Endothelial cell of umbilical vein (primary cell): ENCODE measurements at regions of chr11 and their contacts with region 1.

Region 1: GRCh38 chr11:11787305-11788062 is 54.3 kb upstream of the USP47 start:
- DNase-seq: peak; percentile 66
- H3K4me3 ChIP-seq: no peak overlapping the region
- H3K27ac ChIP-seq: no peak overlapping the region
- H3K4me1 ChIP-seq: no peaks in the 10 kb centered on the region
- H3K27me3 ChIP-seq: peaks cover 0 to 5% of the 10 kb centered on the region in 2 experiments
- CTCF ChIP-seq: peak; percentile 69 to 73
- POLR2A ChIP-seq: no peak

Region 2: GRCh38 chr11:11022125-11022730 is 765.3 kb before region 1 on chr11:
- CTCF ChIA-PET with region 1: interaction called, 227 read pairs
- POLR2A ChIA-PET with region 1: no interaction called
- dilution Hi-C with region 1: no loop called
- intact Hi-C with region 1: no loop called
- DNase-seq: peak; percentile 29
- H3K4me3 ChIP-seq: no peak overlapping the region
- H3K27ac ChIP-seq: no peak overlapping the region
- H3K4me1 ChIP-seq: peaks cover 19% of the 10 kb centered on the region
- H3K27me3 ChIP-seq: peaks cover 0 to 9% of the 10 kb centered on the region in 2 experiments
- CTCF ChIP-seq: peak; percentile 16 to 26
- POLR2A ChIP-seq: no peak

Region 3: DNA sequence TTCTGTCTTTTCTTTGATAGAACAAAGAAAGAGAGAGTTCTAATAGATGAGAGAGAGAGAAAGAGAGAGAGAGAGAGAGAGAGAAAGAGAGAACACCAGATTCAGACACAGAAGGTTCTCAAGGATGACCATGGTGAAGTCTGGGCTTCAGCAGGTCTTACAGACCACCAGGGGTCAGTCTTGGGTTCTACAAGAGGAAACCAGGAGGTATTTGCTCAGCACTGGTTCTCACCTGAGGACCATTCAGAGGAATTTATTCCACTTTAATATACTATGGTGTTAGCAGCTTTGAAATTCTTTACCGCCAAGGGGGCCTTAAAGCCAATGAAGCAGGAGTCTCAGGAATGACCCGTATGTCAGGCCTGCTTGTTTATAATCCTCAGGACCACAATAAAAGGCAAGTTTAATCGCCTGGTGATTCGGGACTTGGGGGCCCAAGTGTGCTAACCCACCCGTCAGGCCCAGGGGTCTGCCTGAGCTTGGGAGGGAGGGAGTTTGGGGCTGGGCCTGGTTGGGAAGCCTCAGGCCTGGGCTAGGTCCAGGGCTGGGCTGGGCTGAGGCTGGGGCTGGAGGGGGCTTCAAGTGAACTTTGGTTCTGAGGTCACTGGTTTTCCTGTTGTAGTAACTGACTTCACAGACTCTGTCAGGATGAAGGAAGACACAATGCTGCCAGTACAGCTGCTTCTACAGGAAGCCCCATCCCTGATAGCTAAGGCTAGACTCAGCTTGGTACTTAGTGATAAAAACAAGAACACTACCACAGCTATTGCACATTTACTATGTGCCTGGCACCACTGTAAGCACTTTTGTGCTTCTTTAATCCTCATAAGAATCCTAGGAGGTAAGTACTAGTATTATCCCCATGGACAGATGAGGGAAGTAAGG is 750.4 kb before region 1 on chr11:
- CTCF ChIA-PET with region 1: interaction called, 53 read pairs
- POLR2A ChIA-PET with region 1: no interaction called
- dilution Hi-C with region 1: no loop called
- intact Hi-C with region 1: loop called (anchors 1 kb)
- DNase-seq: peak; percentile 16
- H3K4me3 ChIP-seq: no peak overlapping the region
- H3K27ac ChIP-seq: no peak overlapping the region
- H3K4me1 ChIP-seq: no peaks in the 10 kb centered on the region
- H3K27me3 ChIP-seq: peaks cover 0 to 13% of the 10 kb centered on the region in 2 experiments
- CTCF ChIP-seq: peak; percentile 34 to 59
- POLR2A ChIP-seq: no peak

Region 4: GRCh38 chr11:11230802-11231562 is 556.5 kb before region 1 on chr11:
- CTCF ChIA-PET with region 1: interaction called, 8 read pairs
- POLR2A ChIA-PET with region 1: no interaction called
- dilution Hi-C with region 1: no loop called
- intact Hi-C with region 1: loop called (anchors 1 kb)
- DNase-seq: no peak
- H3K4me3 ChIP-seq: no peak overlapping the region
- H3K27ac ChIP-seq: no peak overlapping the region
- H3K4me1 ChIP-seq: no peaks in the 10 kb centered on the region
- H3K27me3 ChIP-seq: no peaks in the 10 kb centered on the region
- CTCF ChIP-seq: peak; percentile 22 to 35
- POLR2A ChIP-seq: no peak

Region 5: GRCh38 chr11:11621573-11622319 is 165.7 kb before region 1 on chr11 and contains the start of gene GALNT18:
- CTCF ChIA-PET with region 1: no interaction called
- POLR2A ChIA-PET with region 1: no interaction called
- dilution Hi-C with region 1: no loop called
- intact Hi-C with region 1: loop called (anchors 5 kb)
- DNase-seq: peak; percentile 88
- H3K4me3 ChIP-seq: peak within 1 kb of the TSS in 2 of 3 experiments; percentile 28 to 31
- H3K27ac ChIP-seq: no peak within 1 kb of the TSS
- H3K4me1 ChIP-seq: no peaks in the 10 kb centered on the region
- H3K27me3 ChIP-seq: peaks cover 39% of the 10 kb centered on the region in 2 experiments
- CTCF ChIP-seq: peak; percentile 13 to 55
- POLR2A ChIP-seq: no peak
- total RNA-seq, gene GALNT18: 0.18 and 0.32 TPM in 2 replicates

Region 6: DNA sequence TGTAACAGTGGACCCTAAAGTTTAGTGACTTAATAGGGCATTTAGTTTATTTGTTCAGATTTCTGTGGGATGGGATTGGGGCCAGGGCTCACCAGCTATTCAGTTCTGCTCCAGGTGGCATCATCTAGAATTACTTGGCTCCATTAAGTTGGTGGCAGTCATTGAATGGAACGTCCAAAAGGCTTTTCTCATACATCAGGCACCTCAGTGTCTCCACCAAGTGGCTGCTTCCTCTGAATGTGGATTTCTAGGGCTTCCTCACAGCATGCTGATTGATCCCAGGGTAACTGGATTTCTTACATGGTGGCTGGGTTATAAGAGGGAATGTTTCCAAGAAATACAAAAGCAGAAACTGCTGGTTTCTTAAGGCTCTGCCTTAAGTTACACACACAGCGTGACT is 89.0 kb after region 1 on chr11:
- CTCF ChIA-PET with region 1: no interaction called
- POLR2A ChIA-PET with region 1: no interaction called
- dilution Hi-C with region 1: no loop called
- intact Hi-C with region 1: no loop called
- DNase-seq: no peak
- H3K4me3 ChIP-seq: no peak overlapping the region
- H3K27ac ChIP-seq: no peak overlapping the region
- H3K4me1 ChIP-seq: no peaks in the 10 kb centered on the region
- H3K27me3 ChIP-seq: no peaks in the 10 kb centered on the region
- CTCF ChIP-seq: peak; percentile 5 to 10
- POLR2A ChIP-seq: no peak